HepG2 (cell line): ENCODE measurements at regions of chr3 and their contacts with region 1.

Region 1: DNA sequence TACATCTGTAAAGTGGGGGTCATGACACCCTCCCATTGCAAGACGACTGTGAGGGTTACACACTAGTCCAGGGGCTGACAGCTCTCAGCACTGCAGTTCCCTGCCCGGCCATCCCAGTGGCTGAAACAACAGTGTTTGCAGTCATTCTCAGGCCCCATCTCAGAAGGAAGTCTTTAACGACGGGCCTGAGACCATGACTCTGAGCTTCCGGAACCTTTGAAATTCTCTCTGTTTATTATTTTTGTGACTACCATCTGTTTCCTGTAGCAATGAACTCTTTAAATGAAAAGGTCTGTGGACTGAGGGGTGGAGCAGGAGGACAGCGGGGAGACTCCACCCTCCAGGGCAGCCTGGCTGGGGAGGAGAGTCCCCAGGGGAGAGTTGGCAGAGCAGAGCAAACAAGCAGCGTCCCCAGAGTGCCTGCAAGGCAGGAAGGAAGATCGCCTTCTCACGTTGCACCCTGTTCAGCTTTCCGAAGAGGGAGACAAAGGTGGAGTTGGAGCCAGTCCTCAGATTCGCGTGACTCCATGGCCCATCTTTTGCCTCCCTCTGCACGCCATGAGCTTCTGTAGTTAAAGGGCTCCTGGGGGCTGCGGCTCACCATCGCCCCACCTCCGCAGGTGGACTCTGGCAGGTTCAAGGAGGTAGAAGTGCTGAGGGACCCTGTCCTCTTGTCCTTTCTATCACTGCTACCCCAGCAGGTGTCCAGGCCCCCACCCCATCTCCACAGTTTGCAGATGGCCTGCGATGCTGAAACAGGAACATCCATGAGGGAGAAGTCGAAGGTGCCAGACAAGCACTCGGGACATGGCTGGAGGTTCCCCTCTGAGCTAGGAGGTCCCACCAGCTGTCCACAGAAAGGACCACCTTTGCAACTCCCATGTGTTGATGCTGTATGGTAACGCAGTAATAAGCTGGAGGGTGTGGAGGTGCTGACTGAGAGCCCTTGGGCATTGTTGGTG is 525.8 kb upstream of the PROK2 start:
- DNase-seq: peak; percentile 16
- ATAC-seq: peak; percentile 91
- H3K4me3 ChIP-seq: peak overlapping the region in 1 of 3 experiments; percentile 63; a peak in 3 of 6 replicates
- H3K27ac ChIP-seq: no peak overlapping the region
- H3K4me1 ChIP-seq: peaks cover 14% of the 10 kb centered on the region
- H3K27me3 ChIP-seq: peaks cover 0 to 4% of the 10 kb centered on the region in 2 experiments; a peak in 1 of 5 replicates
- CTCF ChIP-seq: no peak
- EP300 ChIP-seq: no peak
- POLR2A ChIP-seq: no peak
- RAD21 ChIP-seq: no peak

Region 2: GRCh38 chr3:72388117-72388516 is 77.4 kb after region 1 on chr3:
- CTCF ChIA-PET with region 1: no interaction called
- POLR2A ChIA-PET with region 1: no interaction called
- in situ Hi-C with region 1: no loop called
- intact Hi-C with region 1: loop called (anchors 2 kb)
- DNase-seq: no peak
- ATAC-seq: no peak
- H3K4me3 ChIP-seq: no peak overlapping the region
- H3K27ac ChIP-seq: no peak overlapping the region
- H3K4me1 ChIP-seq: peaks cover 25% of the 10 kb centered on the region
- H3K27me3 ChIP-seq: no peaks in the 10 kb centered on the region
- CTCF ChIP-seq: no peak
- EP300 ChIP-seq: no peak
- POLR2A ChIP-seq: no peak
- RAD21 ChIP-seq: no peak

Region 3: GRCh38 chr3:73868688-73869315 is 1558.1 kb after region 1 on chr3:
- CTCF ChIA-PET with region 1: no interaction called
- POLR2A ChIA-PET with region 1: no interaction called
- in situ Hi-C with region 1: no loop called
- intact Hi-C with region 1: no loop called
- DNase-seq: peak; percentile 12
- ATAC-seq: peak; percentile 70
- H3K4me3 ChIP-seq: no peak overlapping the region
- H3K27ac ChIP-seq: no peak overlapping the region
- H3K4me1 ChIP-seq: no peaks in the 10 kb centered on the region
- H3K27me3 ChIP-seq: no peaks in the 10 kb centered on the region
- CTCF ChIP-seq: peak; percentile 55
- EP300 ChIP-seq: no peak
- POLR2A ChIP-seq: no peak
- RAD21 ChIP-seq: no peak